GM12878 (cell line): ENCODE measurements at regions of chr13 and their contacts with region 1.

Region 1: DNA sequence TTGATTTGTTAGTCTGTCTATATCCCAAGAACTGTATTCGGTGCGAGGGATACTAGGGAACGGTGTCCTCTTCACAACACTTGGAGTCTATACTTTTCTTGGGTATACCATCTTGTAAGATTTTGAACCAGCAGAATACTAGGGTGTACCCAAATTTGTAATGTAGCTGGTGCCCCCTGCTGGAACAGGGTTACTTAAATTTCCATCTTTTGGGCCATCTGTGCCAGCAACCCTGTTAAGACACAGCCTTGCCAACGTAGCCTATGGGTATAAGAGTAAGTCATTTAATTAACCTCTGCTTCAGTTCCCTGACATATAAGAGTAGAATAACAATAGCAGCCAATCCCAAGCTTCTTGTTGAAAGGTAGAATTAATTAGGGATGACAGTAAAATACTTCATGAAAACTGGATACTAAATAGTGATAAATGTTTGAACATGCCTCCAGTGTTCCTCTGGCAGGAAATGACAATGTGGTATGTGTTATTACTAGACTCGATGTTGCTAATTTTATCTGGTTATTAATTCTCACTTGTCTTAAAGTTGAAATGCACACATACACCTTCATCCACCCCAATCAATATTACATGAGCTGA is 607.6 kb downstream of the FGF9 start:
- DNase-seq: peak; percentile 43
- ATAC-seq: peak; percentile 97
- H3K4me3 ChIP-seq: no peak overlapping the region
- H3K27ac ChIP-seq: no peak overlapping the region
- H3K4me1 ChIP-seq: no peaks in the 10 kb centered on the region
- H3K27me3 ChIP-seq: no peaks in the 10 kb centered on the region
- CTCF ChIP-seq: peak; percentile 47 to 76 (median 59); a peak in 4 of 6 replicates
- EP300 ChIP-seq: no peak
- POLR2A ChIP-seq: no peak
- RAD21 ChIP-seq: peak; percentile 91

Region 2: DNA sequence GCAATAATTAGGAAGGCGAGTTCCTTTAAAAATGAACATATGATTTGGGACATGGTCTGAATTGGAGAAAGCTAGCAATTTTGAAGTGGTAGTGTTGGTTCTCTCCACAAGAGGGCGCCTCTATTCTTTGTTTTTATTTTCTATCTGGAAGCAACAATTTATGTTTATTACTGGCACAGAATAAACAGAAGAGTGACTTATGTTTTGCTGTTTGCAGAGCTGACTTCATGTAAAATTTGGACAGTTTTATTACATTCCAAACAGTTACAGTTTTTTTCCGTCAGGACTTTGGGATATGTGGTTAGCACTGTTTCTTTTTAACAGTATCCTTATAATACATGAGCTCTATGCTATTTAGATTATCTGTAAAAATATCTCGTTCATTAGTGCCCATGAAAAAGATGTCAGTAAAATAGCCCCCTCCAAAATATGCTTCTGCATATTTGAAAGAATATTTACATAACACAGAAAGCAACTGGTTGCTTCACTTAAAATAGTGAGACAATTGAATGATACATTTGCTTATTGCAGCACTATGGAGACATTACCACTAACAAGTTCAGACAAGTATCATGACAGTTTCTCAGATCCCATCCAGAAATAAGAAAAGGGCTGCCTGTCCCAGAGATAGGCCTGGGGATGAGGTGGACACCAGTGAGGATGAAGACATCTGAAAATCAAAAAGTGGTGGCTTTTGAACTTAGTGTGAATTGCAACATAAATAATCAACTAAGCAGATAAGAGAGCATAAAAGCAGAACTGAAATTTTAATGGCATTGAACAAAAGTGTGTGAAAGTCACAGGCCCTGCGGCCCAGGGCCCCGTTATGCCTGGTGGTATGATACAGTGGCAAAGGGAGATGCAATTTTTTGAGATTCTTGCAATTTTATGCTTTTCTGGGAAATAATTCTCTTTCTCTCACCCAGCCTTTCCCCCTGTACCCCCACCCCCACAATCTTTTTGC is 639.8 kb before region 1 on chr13:
- CTCF ChIA-PET with region 1: interaction called, 35 read pairs
- POLR2A ChIA-PET with region 1: no interaction called
- RAD21 ChIA-PET with region 1: interaction called, 35 read pairs
- SMC1A ChIA-PET with region 1: interaction called, 36 read pairs
- in situ Hi-C with region 1: loop called (anchors 5 kb)
- intact Hi-C with region 1: loop called (anchors 1 kb)
- DNase-seq: no peak
- ATAC-seq: peak; percentile 79
- H3K4me3 ChIP-seq: no peak overlapping the region
- H3K27ac ChIP-seq: no peak overlapping the region
- H3K4me1 ChIP-seq: no peaks in the 10 kb centered on the region
- H3K27me3 ChIP-seq: no peaks in the 10 kb centered on the region
- CTCF ChIP-seq: peak; percentile 58 to 67 (median 65)
- EP300 ChIP-seq: no peak
- POLR2A ChIP-seq: no peak
- RAD21 ChIP-seq: peak; percentile 78

Region 3: GRCh38 chr13:21913010-21913409 is 365.4 kb before region 1 on chr13:
- CTCF ChIA-PET with region 1: interaction called, 22 read pairs
- POLR2A ChIA-PET with region 1: no interaction called
- RAD21 ChIA-PET with region 1: interaction called, 11 read pairs
- SMC1A ChIA-PET with region 1: interaction called, 10 read pairs
- in situ Hi-C with region 1: no loop called
- intact Hi-C with region 1: no loop called
- DNase-seq: no peak
- ATAC-seq: peak; percentile 62
- H3K4me3 ChIP-seq: no peak overlapping the region
- H3K27ac ChIP-seq: no peak overlapping the region
- H3K4me1 ChIP-seq: no peaks in the 10 kb centered on the region
- H3K27me3 ChIP-seq: no peaks in the 10 kb centered on the region
- CTCF ChIP-seq: peak in 2 of 3 experiments; percentile 15 to 26; a peak in 3 of 6 replicates
- EP300 ChIP-seq: no peak
- POLR2A ChIP-seq: no peak
- RAD21 ChIP-seq: peak; percentile 72

Region 4: DNA sequence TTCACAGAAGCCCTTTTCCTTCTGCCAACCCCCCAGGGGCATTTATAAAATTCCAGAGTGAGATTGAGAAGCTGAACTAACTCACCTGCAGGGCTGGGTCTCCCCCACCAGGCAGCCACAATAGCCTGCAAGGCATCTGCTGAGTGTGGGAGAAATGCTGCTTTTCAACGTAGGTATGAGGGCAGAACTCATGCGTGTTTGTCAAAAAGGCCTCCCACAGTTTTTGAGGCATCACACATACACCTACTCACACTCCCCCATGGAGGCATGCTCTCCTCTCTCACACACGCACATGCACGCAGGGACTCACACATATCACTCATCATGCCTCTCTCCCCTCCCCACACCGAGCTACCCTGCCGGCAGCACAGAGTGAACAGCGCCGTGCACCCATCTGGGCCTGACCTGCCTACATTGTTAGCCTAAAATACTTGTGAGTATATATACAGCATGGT is 217.1 kb before region 1 on chr13:
- CTCF ChIA-PET with region 1: interaction called, 5 read pairs
- POLR2A ChIA-PET with region 1: no interaction called
- RAD21 ChIA-PET with region 1: interaction called, 4 read pairs
- SMC1A ChIA-PET with region 1: interaction called, 5 read pairs
- in situ Hi-C with region 1: no loop called
- intact Hi-C with region 1: loop called (anchors 2 kb)
- DNase-seq: peak; percentile 51
- ATAC-seq: peak; percentile 83
- H3K4me3 ChIP-seq: no peak overlapping the region
- H3K27ac ChIP-seq: peak overlapping the region; percentile 94
- H3K4me1 ChIP-seq: peaks cover 25% of the 10 kb centered on the region
- H3K27me3 ChIP-seq: no peaks in the 10 kb centered on the region
- CTCF ChIP-seq: peak; percentile 15 to 50 (median 41); a peak in 3 of 6 replicates
- EP300 ChIP-seq: peak; percentile 5 to 80; a peak in 3 of 4 replicates
- POLR2A ChIP-seq: peak; percentile 36; the same call in 1 of the 2 replicates
- RAD21 ChIP-seq: peak; percentile 63

Region 5: GRCh38 chr13:22121146-22121739 is 157.2 kb before region 1 on chr13:
- CTCF ChIA-PET with region 1: interaction called, 6 read pairs
- POLR2A ChIA-PET with region 1: no interaction called
- RAD21 ChIA-PET with region 1: interaction called, 14 read pairs
- SMC1A ChIA-PET with region 1: interaction called, 5 read pairs
- in situ Hi-C with region 1: no loop called
- intact Hi-C with region 1: no loop called
- DNase-seq: peak; percentile 49
- ATAC-seq: peak; percentile 79
- H3K4me3 ChIP-seq: no peak overlapping the region
- H3K27ac ChIP-seq: peak overlapping the region; percentile 33; the same call in 1 of the 2 replicates
- H3K4me1 ChIP-seq: peaks cover 24% of the 10 kb centered on the region
- H3K27me3 ChIP-seq: no peaks in the 10 kb centered on the region
- CTCF ChIP-seq: no peak
- EP300 ChIP-seq: peak in 1 of 2 experiments; percentile 42; a peak in 1 of 4 replicates
- POLR2A ChIP-seq: no peak
- RAD21 ChIP-seq: no peak